Sigmoid colon (tissue), 7 donors: ENCODE measurements at regions of chrX and their contacts with region 1.

Region 1: DNA sequence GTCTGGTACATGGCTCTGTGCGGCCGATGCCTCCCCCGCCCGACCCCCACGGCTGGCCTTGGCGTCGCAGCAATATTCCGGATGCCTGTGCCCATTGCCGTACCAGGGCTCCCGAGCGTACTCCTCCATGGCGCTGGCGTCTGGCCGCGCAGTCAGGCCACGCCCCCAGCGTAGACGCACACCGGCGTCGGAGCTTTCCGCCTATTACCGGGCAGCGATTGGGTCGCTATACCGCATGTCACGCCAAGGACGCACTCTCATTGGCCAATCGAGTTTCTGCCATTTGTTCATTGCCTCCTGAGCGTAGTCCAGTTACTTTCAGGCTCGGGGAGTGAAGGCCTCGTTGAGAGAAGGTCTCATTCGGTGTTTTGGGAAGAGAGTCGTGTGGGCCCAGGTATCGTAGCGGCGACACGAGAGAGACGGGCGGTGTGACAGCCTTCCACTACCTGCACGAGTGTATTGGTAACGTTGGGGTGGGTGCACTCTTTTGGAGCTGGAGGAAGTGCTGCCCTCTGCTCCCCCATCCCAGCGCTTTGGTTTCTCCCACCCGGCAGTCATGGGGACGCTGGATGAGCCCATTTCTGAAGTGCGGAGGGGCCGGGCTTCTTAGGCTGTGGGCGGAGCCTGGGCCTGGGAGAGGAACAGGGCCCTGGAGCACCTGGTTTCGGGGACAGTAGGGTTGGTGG is at the starts of genes PQBP1 and TIMM17B:
- DNase-seq: peak; percentile 96
- H3K4me3 ChIP-seq: peak within 1 kb of the TSS; percentile 59 to 70 (median 66)
- H3K27ac ChIP-seq: peak within 1 kb of the TSS; percentile 94 to 98 (median 95)
- H3K4me1 ChIP-seq: peaks cover 0 to 19% (median 17%) of the 10 kb centered on the region in 4 donors
- H3K27me3 ChIP-seq: no peaks in the 10 kb centered on the region
- CTCF ChIP-seq: no peak
- EP300 ChIP-seq: no peak
- POLR2A ChIP-seq: peak; percentile 59 to 69
- total RNA-seq, gene PQBP1: 83.1 to 103 (median 94.9) TPM
- total RNA-seq, gene TIMM17B: 37.7 to 59.6 (median 45.7) TPM

Region 2: DNA sequence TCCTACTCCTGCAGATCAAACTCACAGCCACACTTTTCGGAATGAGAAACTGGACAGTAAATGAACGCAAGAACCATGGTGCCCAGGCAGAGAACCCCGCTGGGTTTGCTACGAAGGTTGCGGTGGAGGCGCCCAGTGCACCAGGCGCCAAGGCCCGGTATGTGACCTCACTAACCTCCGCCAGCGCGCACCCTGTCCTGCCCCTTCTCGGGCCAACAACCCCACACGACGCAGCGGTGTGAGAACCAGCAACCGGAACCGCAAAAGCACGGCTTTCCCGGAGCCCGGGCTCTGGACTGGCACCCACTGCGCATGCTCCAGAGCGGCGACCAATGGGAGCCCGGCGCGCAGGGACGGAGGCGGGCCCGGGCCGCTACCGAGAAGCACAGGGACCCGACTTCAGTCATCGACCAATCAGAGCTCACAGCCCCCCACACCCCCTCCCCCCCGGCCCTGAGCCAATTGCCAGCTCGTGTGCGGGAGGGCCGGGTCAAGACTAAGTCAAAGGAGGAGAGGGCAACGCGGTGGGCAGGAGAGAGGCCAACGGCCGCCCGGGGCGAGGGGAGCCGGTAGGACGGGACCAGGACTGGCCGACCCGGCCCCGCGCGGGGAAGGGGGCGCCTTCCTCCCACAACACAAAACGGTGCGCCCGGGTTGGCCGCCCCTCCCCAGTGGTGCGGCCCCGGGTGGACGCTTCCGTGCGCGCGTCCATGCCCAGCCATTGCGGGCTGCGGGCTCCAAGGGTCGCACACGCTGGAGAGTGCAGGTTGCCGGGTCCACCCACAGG is 221.5 kb before region 1 on chrX:
- intact Hi-C with region 1: loop called (anchors 10 kb)
- DNase-seq: peak; percentile 95
- H3K4me3 ChIP-seq: peak overlapping the region; percentile 60 to 74 (median 72)
- H3K27ac ChIP-seq: peak overlapping the region; percentile 86 to 91 (median 86)
- H3K4me1 ChIP-seq: peaks cover 0 to 13% (median 4%) of the 10 kb centered on the region in 4 donors
- H3K27me3 ChIP-seq: no peaks in the 10 kb centered on the region
- CTCF ChIP-seq: no peak
- EP300 ChIP-seq: no peak
- POLR2A ChIP-seq: peak; percentile 38 to 68